ENCODE measurements at regions of chr7 and their contacts with region 1.

Region 1: GRCh38 chr7:111741811-111742240 is 179.5 kb upstream of the IMMP2L start:
- DNase-seq: peak; percentile 45
- H3K4me3 ChIP-seq: no peak overlapping the region
- H3K27ac ChIP-seq: no peak overlapping the region
- H3K4me1 ChIP-seq: no peaks in the 10 kb centered on the region
- H3K27me3 ChIP-seq: no peaks in the 10 kb centered on the region
- CTCF ChIP-seq: peak; percentile 69

Region 2: DNA sequence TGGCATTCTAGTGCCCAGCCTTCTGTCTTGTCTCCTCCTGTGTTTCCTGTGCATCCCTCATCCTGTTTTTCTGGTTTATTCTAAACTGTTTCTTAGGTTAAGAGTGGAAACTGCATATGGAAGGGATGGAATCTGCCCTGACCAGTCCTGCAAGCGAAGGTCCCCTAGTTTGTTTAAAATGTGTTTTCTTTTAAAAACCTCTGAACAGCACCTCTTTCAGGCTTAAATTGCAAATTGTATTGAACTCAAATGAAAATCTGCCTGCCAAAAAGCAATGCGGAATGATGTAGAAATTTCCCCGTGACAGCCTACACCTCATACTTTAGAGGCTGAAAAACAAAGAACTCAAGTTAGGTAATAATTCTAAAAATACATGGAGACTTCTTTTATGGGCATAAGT is 43.2 kb after region 1 on chr7:
- intact Hi-C with region 1: no loop called
- DNase-seq: no peak
- H3K4me3 ChIP-seq: no peak overlapping the region
- H3K27ac ChIP-seq: no peak overlapping the region
- H3K4me1 ChIP-seq: no peaks in the 10 kb centered on the region
- H3K27me3 ChIP-seq: no peaks in the 10 kb centered on the region
- CTCF ChIP-seq: no peak

Region 3: GRCh38 chr7:111878785-111879184 is 137.0 kb after region 1 on chr7:
- intact Hi-C with region 1: no loop called
- DNase-seq: no peak
- H3K4me3 ChIP-seq: no peak overlapping the region
- H3K27ac ChIP-seq: no peak overlapping the region
- H3K4me1 ChIP-seq: no peaks in the 10 kb centered on the region
- H3K27me3 ChIP-seq: no peaks in the 10 kb centered on the region
- CTCF ChIP-seq: no peak

Region 4: GRCh38 chr7:112495810-112496462 is 754.1 kb after region 1 on chr7:
- intact Hi-C with region 1: loop called (anchors 5 kb)
- DNase-seq: peak; percentile 47
- H3K4me3 ChIP-seq: no peak overlapping the region
- H3K27ac ChIP-seq: no peak overlapping the region
- H3K4me1 ChIP-seq: no peaks in the 10 kb centered on the region
- H3K27me3 ChIP-seq: no peaks in the 10 kb centered on the region
- CTCF ChIP-seq: peak; percentile 39